Right ventricle myocardium inferior (tissue), 1 donor: ENCODE measurements at regions of chr13 and their contacts with region 1.

Region 1: GRCh38 chr13:60969656-60970055 is 446.0 kb downstream of the PCDH20 start:
- DNase-seq: no peak
- ATAC-seq: peak; percentile 73

Region 2: GRCh38 chr13:61142506-61142905 is 172.8 kb after region 1 on chr13:
- intact Hi-C with region 1: no loop called
- DNase-seq: no peak
- ATAC-seq: no peak

Region 3: DNA sequence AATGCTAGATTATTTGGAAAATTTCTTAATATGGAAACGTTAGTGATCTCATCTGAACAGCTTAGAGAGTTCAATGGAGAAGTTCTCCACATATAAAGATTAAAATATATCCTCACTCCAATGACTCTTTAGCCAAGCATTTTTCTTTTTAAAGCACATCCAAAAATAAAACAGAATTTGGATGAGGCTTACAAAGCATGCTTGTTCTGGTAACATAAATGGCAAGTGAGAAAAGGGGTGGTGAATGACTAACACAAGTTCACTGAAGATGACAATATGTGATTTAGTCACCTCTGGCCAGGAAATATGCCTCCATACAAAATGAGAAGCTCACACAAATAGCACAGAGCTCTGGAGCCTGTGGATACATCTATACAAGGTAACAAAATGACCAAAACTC is 193.0 kb after region 1 on chr13:
- intact Hi-C with region 1: loop called (anchors 5 kb)
- DNase-seq: no peak
- ATAC-seq: peak; percentile 87

Region 4: DNA sequence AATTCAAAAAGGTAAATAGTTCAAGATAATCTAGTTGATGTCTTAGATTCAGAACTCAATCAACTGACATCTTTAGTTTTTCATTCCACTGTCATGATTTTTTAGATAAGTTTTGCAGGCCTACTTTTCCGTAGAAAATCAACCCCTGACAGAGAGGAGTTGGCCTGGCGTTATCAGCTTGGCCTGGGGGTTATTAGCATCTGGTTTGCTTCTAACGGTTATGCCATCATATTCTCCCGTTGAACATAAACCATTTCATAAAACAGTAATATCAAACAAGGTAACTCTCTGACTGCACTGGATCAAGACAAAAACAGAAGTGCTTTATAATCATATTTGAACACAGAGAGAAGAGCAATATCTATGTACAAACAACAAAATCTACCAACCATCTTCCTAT is 576.8 kb after region 1 on chr13:
- intact Hi-C with region 1: no loop called
- DNase-seq: no peak
- ATAC-seq: no peak